ENCODE measurements at regions of chr1 and their contacts with region 1.

Region 1: DNA sequence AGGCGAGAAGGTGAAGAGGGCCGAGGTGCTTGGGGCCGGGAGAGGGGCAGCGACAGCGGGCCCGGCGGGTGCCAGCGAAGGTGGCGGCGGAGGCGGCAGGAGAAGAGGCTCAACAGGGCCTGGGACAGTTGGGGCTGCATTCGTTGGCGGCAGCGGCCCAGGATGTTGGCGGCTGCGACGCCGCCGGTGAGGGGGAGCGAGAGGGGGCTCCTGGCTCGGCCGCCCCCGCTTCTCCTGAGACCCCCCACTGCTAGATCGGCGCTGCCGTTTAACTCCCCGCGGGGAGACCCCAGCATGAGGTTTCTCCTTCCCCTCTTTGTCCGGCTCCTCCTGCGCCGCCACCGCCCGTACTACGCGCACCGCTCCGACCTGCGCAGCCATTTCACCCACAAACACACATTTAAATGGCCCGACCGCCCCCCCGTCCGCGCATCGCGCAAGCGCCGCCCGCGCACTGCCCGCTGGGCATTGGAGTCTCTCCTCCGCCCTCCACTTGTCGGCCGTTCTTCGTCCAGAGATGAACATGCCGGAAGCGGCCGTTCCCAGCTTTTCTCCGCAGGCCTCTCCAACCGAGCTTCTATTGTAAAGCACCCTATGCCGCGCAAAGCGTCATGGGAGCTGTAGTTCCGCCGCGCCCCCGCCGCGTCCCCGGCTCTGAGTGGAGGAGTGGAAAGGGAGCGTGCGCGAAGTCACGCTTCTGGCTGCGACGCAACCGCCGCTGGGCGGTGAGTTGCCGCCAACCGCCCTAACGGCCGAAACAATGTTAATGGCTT is at the start of gene RSBN1:
- DNase-seq: peak; percentile 99
- H3K4me3 Mint-ChIP-seq: peak within 1 kb of the TSS; percentile 98
- H3K27ac Mint-ChIP-seq: peak within 1 kb of the TSS; percentile 94
- H3K4me1 Mint-ChIP-seq: peaks cover 31% of the 10 kb centered on the region
- H3K27me3 Mint-ChIP-seq: no peaks in the 10 kb centered on the region
- total RNA-seq, gene RSBN1: 13.6 to 14.3 TPM

Region 2: DNA sequence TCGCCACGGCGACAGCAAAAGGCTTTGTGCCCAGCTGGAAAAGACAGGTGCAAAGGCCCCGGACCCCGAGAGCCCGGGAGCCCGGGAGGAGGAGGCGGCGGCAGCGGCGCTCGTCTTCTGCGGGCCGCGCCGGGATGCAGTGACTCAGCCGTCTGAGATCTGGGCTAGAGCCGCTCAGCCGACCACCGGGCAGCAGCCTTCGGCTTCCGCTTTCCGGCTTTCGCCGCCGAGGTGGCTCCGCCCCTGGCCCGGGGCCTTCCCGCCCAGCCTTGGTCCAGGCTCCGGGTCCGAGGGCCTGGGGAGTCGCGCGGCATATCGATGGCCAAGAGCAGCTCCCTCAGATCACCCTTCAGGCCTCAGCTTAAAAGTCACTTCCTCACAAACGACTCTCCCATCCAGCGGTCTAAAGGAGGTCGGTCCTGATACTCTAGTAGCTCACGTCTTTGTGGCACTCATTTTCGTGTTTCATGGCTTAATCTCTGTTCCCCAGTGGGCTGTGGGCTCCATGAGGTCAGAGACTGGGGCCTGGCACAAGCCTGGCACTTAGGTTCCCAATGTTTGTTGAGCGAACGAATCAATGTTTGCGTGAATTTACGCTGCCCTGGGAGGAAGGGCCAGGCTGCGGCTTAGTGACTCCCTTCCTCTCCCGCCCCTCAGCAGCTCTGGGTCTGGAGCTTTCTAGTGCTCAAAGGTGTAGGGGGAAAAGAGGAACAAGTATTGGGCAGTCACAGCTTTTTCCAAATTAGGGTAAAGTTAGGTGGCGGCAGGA is 52.6 kb before region 1 on chr1 and contains the start of gene PHTF1:
- CTCF ChIA-PET with region 1: no interaction called
- intact Hi-C with region 1: loop called (anchors 1 kb)
- DNase-seq: peak; percentile 63
- H3K4me3 Mint-ChIP-seq: peak within 1 kb of the TSS; percentile 92
- H3K27ac Mint-ChIP-seq: peak within 1 kb of the TSS; percentile 96
- H3K4me1 Mint-ChIP-seq: peaks cover 14% of the 10 kb centered on the region
- H3K27me3 Mint-ChIP-seq: no peaks in the 10 kb centered on the region
- total RNA-seq, gene PHTF1: 5.4 to 6.3 TPM